A549 (cell line): ENCODE measurements at regions of chr7 and their contacts with region 1.

Region 1: GRCh38 chr7:149809215-149809614 is 29.0 kb upstream of the ZNF862 start:
- DNase-seq: no peak
- ATAC-seq: no peak
- H3K4me3 ChIP-seq: no peak overlapping the region
- H3K27ac ChIP-seq: no peak overlapping the region
- H3K4me1 ChIP-seq: no peaks in the 10 kb centered on the region
- CTCF ChIP-seq: no peak
- EP300 ChIP-seq: no peak
- POLR2A ChIP-seq: no peak
- RAD21 ChIP-seq: no peak

Region 2: GRCh38 chr7:149474309-149475114 is 334.7 kb before region 1 on chr7:
- CTCF ChIA-PET with region 1: no interaction called
- POLR2A ChIA-PET with region 1: no interaction called
- DNase-seq: no peak
- ATAC-seq: no peak
- H3K4me3 ChIP-seq: no peak overlapping the region
- H3K27ac ChIP-seq: no peak overlapping the region
- H3K4me1 ChIP-seq: no peaks in the 10 kb centered on the region
- CTCF ChIP-seq: no peak
- EP300 ChIP-seq: no peak
- POLR2A ChIP-seq: no peak
- RAD21 ChIP-seq: no peak

Region 3: GRCh38 chr7:149532654-149533053 is 276.6 kb before region 1 on chr7:
- CTCF ChIA-PET with region 1: no interaction called
- POLR2A ChIA-PET with region 1: no interaction called
- DNase-seq: no peak
- ATAC-seq: no peak
- H3K4me3 ChIP-seq: no peak overlapping the region
- H3K27ac ChIP-seq: no peak overlapping the region
- H3K4me1 ChIP-seq: no peaks in the 10 kb centered on the region
- CTCF ChIP-seq: no peak
- EP300 ChIP-seq: no peak
- POLR2A ChIP-seq: no peak
- RAD21 ChIP-seq: no peak

Region 4: DNA sequence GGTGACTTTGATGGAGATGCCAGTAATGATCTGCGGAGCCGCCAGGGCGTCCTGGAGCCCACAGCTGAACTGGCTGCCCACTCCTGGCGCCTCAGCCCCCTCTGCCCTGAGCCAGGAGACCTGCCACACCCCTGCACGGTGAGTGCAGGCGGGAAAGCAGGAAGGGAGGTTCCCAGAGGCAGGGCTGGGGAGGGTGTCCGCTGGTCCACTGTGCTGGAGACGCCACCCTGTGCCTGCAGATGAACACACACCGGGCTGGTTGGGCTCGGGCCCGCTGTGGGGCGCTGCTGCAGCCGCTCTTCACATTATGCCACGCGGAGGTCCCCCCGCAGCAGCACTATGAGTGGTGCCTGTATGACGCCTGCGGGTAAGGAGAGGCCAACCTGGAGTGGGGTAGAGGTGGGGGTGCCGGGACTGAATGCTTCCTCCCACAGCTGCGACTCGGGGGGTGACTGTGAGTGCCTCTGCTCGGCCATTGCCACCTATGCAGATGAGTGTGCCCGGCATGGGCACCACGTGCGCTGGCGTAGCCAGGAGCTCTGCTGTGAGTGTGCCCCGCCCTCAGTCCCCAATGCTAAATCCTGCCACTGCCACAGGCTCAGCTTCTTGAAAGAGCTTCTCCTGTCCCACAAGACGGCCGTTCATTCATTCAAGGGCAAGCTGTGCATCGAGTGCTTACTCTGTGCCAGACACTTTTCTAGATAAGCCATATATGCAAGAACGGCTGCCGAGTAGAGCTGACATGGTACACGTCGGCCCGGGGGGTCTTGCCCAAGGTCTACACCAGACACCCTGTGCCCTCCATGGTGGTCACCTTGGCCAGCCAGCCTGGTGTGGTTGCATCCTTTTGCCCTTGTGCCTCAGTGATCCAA is 21.6 kb before region 1 on chr7:
- CTCF ChIA-PET with region 1: interaction called, 12 read pairs
- POLR2A ChIA-PET with region 1: no interaction called
- DNase-seq: peak; percentile 58 to 64
- ATAC-seq: peak; percentile 74 to 88
- H3K4me3 ChIP-seq: no peak overlapping the region
- H3K27ac ChIP-seq: peak overlapping the region in 1 of 2 experiments; percentile 50; a peak in 2 of 6 replicates
- H3K4me1 ChIP-seq: peaks cover 8% of the 10 kb centered on the region; the same call in 1 of the 3 replicates
- CTCF ChIP-seq: peak; percentile 36
- EP300 ChIP-seq: no peak
- POLR2A ChIP-seq: no peak
- RAD21 ChIP-seq: peak in 1 of 2 experiments; percentile 33; a peak in 2 of 5 replicates

Region 5: GRCh38 chr7:149822353-149822943 is 13.2 kb after region 1 on chr7:
- CTCF ChIA-PET with region 1: interaction called, 30 read pairs
- POLR2A ChIA-PET with region 1: no interaction called
- DNase-seq: no peak
- ATAC-seq: no peak
- H3K4me3 ChIP-seq: no peak overlapping the region
- H3K27ac ChIP-seq: no peak overlapping the region
- H3K4me1 ChIP-seq: no peaks in the 10 kb centered on the region
- CTCF ChIP-seq: no peak
- EP300 ChIP-seq: no peak
- POLR2A ChIP-seq: no peak
- RAD21 ChIP-seq: no peak

Region 6: GRCh38 chr7:149850007-149850594 is 40.9 kb after region 1 on chr7:
- CTCF ChIA-PET with region 1: interaction called, 11 read pairs
- POLR2A ChIA-PET with region 1: no interaction called
- DNase-seq: no peak
- ATAC-seq: peak in 1 of 2 experiments; percentile 47; a peak in 1 of 6 replicates
- H3K4me3 ChIP-seq: no peak overlapping the region
- H3K27ac ChIP-seq: no peak overlapping the region
- H3K4me1 ChIP-seq: peaks cover 4% of the 10 kb centered on the region; the same call in 1 of the 3 replicates
- CTCF ChIP-seq: no peak
- EP300 ChIP-seq: no peak
- POLR2A ChIP-seq: no peak
- RAD21 ChIP-seq: no peak